ENCODE measurements at regions of chr17 and their contacts with region 1.

Region 1: GRCh38 chr17:64661976-64662773 is at the start of gene SMURF2:
- DNase-seq: peak; percentile 75
- H3K4me3 Mint-ChIP-seq: peak within 1 kb of the TSS; percentile 96
- H3K27ac Mint-ChIP-seq: peak within 1 kb of the TSS; percentile 94
- H3K4me1 Mint-ChIP-seq: peaks cover 27% of the 10 kb centered on the region
- H3K27me3 Mint-ChIP-seq: no peaks in the 10 kb centered on the region
- total RNA-seq, gene SMURF2: 12.6 and 13.1 TPM in 2 replicates

Region 2: DNA sequence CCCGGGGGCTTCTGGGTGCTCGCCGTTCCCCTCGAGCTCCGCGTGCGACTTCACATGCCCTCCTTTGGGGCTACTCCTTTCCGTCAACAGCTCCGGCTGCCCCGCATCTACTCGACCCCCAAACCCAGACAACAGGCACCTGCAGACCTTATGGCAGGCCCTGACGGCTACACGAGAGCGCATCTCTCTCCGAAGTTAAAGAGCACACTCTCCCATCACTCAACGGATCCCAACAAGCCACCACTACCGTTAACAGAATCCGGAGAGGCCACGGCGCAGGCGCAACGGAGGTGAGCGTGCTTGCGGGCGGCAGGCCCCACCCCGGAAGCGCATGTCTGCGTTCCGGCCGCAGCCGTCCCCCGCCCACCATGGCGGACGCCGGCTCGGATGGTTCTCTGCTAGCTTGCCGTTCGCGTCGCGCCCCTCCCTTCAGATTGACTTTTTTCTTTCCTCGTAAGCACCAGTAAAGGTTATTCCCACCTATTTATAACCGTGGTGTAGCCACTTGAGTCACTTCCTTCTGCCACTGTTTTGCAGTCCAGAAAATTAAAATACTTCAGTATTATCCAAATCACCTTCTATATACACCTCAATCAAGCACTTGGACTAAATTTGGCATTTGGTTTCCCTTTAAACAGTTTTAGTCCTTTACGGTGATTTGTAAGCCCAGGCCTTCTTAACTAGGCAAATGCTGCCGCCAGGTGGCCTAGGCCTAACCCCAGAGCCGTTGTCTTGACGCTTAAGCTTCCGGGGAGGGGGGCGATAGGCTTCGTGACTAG is 165.2 kb before region 1 on chr17 and contains the start of gene POLG2:
- intact Hi-C with region 1: loop called (anchors 2 kb)
- DNase-seq: peak; percentile 95
- H3K4me3 Mint-ChIP-seq: peak within 1 kb of the TSS; percentile 99
- H3K27ac Mint-ChIP-seq: peak within 1 kb of the TSS; percentile 96
- H3K4me1 Mint-ChIP-seq: peaks cover 60% of the 10 kb centered on the region
- H3K27me3 Mint-ChIP-seq: no peaks in the 10 kb centered on the region
- total RNA-seq, gene POLG2: 29.6 and 33.8 TPM in 2 replicates

Region 3: DNA sequence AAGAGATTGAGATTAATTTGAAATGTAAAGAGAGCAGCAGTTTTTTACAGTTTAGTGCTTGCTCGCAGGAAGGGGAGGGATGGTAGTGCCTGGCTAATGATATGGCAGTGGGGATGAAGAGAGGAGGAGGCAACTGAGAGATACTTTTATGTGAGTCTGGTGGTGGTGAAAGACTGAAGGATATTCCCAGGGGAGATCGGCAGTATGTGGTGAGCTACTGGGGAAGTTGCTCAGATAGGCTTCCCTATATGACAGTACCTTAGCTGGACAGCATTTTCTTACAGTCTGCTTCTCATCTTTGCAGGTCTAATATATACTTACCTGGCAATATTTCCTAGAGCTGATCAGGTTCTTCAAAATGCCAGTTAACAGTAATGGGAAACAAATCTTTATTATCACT is 146.8 kb before region 1 on chr17:
- intact Hi-C with region 1: no loop called
- DNase-seq: no peak
- H3K4me3 Mint-ChIP-seq: no peak overlapping the region
- H3K27ac Mint-ChIP-seq: no peak overlapping the region
- H3K4me1 Mint-ChIP-seq: peaks cover 14% of the 10 kb centered on the region
- H3K27me3 Mint-ChIP-seq: no peaks in the 10 kb centered on the region

Region 4: DNA sequence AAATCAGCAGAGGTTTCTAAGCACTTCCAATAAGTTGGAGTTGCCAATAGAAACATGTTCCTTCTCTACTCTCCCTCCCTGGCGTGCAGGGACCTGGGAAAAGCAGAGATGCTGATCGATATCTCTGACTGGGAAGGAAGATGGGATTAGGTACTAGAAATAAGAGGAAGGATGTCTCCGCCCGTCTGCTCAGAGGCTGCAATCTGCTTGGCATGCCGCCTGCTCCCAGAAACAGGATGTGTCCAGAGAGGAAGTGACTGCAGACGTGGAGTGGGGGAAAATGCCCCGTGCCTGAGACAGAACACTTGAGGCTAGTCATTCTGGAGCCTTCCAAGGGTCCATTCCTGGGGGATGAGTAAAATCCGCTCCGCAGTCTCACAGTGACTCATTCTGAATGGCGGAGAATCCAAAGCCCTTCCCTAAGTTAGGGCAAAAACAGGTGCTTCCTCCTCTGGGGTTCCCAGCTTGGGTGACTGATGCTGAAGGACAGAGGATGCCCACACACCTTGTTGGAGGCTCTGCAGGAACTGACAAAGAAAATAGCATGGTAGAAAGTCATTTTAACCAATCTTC is 44.9 kb after region 1 on chr17:
- intact Hi-C with region 1: loop called (anchors 5 kb)
- DNase-seq: no peak
- H3K4me3 Mint-ChIP-seq: no peak overlapping the region
- H3K27ac Mint-ChIP-seq: no peak overlapping the region
- H3K4me1 Mint-ChIP-seq: peaks cover 38% of the 10 kb centered on the region
- H3K27me3 Mint-ChIP-seq: no peaks in the 10 kb centered on the region

Region 5: DNA sequence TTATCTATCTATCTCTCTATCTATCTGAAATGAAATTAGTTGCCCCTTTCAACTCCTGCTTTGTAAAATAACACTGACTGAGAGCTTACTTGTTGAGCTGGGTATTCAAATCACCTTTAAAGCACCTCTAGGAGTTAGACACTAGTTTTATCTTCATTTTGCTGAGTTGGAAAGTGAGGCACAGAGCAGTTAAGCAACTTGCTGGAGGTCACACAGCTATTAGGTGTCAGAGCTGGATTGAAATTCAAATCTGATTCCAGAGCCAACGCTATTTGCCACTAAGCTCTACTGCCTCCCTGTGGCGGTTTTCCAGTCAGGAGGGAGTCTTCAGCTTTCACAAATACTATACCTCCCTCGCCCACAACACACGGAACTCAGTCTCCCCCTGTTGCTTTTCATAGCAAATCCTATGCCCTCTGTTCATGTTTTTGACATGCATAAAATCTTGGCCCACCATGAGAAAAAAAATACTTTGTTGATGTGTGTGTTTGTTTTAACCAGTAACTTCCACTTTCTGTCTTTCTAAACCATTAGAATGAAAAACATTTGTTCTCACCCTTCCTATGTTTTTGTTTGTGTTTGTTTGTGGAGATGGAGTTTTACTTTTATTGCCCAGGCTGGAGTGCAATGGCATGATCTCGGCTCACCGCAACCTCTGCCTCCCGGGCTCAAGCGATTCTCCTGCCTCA is 74.8 kb after region 1 on chr17:
- intact Hi-C with region 1: loop called (anchors 10 kb)
- DNase-seq: peak; percentile 50
- H3K4me3 Mint-ChIP-seq: no peak overlapping the region
- H3K27ac Mint-ChIP-seq: no peak overlapping the region
- H3K4me1 Mint-ChIP-seq: peaks cover 12% of the 10 kb centered on the region
- H3K27me3 Mint-ChIP-seq: no peaks in the 10 kb centered on the region